ENCODE measurements at regions of chr15 and their contacts with region 1.

Region 1: DNA sequence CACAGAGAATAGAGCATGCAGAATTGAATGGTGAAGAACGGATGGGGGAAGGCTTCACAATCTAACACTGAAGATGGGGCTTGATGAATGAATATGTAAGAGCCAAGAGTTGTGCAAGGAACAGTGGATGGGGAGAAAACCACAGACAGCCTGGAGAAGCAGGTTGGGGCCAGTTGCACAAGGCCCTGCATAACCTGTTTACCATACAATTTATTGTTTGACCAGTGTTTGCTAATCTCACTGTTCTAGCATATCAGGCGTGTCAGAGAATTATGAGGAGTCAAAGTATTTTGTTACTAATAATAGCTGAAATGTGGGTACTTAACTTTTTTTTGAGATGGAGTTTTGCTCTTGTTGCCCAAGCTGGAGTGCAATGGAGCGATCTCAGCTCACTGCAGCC is 36.4 kb downstream of the LINS1 start:
- DNase-seq: no peak

Region 2: GRCh38 chr15:100349696-100350433 is 215.7 kb before region 1 on chr15:
- intact Hi-C with region 1: loop called (anchors 5 kb)
- DNase-seq: peak; percentile 97

Region 3: GRCh38 chr15:100526027-100526481 is 39.5 kb before region 1 on chr15:
- intact Hi-C with region 1: no loop called
- DNase-seq: no peak